ENCODE measurements at regions of chr17 and their contacts with region 1.

Region 1: GRCh38 chr17:77957857-77958715 is at the start of gene TNRC6C:
- DNase-seq: peak; percentile 100
- ATAC-seq: peak; percentile 93 to 98
- H3K4me3 ChIP-seq: peak within 1 kb of the TSS; percentile 81
- H3K27ac ChIP-seq: peak within 1 kb of the TSS; percentile 74 to 91
- H3K4me1 ChIP-seq: peaks cover 5% of the 10 kb centered on the region; the same call in 2 of the 3 replicates
- CTCF ChIP-seq: 0 out of 3 replicates have a peak, but pooled peaks have one; percentile 12
- EP300 ChIP-seq: no peak
- POLR2A ChIP-seq: peak; percentile 100
- RAD21 ChIP-seq: no peak; a peak in 1 of 5 replicates
- polyA plus RNA-seq, gene TNRC6C: 1.3 and 3.4 TPM in 2 replicates

Region 2: GRCh38 chr17:77555741-77556291 is 402.3 kb before region 1 on chr17:
- CTCF ChIA-PET with region 1: no interaction called
- POLR2A ChIA-PET with region 1: interaction called, 11 read pairs
- DNase-seq: peak in 1 of 2 experiments; percentile 34
- ATAC-seq: peak in 1 of 2 experiments; percentile 24; a peak in 3 of 6 replicates
- H3K4me3 ChIP-seq: no peak overlapping the region
- H3K27ac ChIP-seq: no peak overlapping the region
- H3K4me1 ChIP-seq: 0 out of 3 replicates have a peak, but pooled peaks cover 3% of the 10 kb centered on the region
- CTCF ChIP-seq: no peak
- EP300 ChIP-seq: no peak
- POLR2A ChIP-seq: no peak
- RAD21 ChIP-seq: no peak

Region 3: GRCh38 chr17:77869665-77870132 is 88.4 kb before region 1 on chr17:
- CTCF ChIA-PET with region 1: no interaction called
- POLR2A ChIA-PET with region 1: interaction called, 18 read pairs
- DNase-seq: no peak
- ATAC-seq: no peak
- H3K4me3 ChIP-seq: no peak overlapping the region
- H3K27ac ChIP-seq: no peak overlapping the region
- H3K4me1 ChIP-seq: no peaks in the 10 kb centered on the region
- CTCF ChIP-seq: no peak
- EP300 ChIP-seq: no peak
- POLR2A ChIP-seq: no peak
- RAD21 ChIP-seq: no peak

Region 4: DNA sequence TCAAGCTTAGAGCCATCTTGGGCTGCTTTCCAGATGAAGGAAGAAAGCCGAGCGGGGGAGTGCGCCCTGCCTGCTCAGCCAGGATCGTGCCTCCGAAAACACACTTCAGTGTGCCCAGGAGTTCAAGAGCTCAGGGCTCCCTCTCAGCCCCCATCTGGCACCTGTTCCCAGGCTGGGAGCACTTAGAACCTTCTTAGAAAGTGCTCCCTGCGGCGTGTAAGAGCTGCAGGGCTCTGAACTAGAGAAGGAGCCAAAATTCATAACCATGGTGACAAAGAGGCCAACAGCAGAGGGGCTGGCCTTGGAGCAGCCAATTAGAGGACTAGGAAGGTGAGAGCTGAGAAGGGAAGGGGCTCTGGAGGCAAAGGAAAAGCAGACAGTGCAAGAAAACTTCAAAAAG is 58.6 kb before region 1 on chr17:
- CTCF ChIA-PET with region 1: interaction called, 4 read pairs
- POLR2A ChIA-PET with region 1: interaction called, 16 read pairs
- DNase-seq: no peak
- ATAC-seq: no peak
- H3K4me3 ChIP-seq: no peak overlapping the region
- H3K27ac ChIP-seq: no peak overlapping the region
- H3K4me1 ChIP-seq: no peaks in the 10 kb centered on the region
- CTCF ChIP-seq: no peak
- EP300 ChIP-seq: no peak
- POLR2A ChIP-seq: no peak
- RAD21 ChIP-seq: no peak

Region 5: GRCh38 chr17:77936881-77937280 is 21.2 kb before region 1 on chr17:
- CTCF ChIA-PET with region 1: interaction called, 10 read pairs
- POLR2A ChIA-PET with region 1: interaction called, 37 read pairs
- DNase-seq: no peak
- ATAC-seq: no peak
- H3K4me3 ChIP-seq: no peak overlapping the region
- H3K27ac ChIP-seq: no peak overlapping the region
- H3K4me1 ChIP-seq: no peaks in the 10 kb centered on the region
- CTCF ChIP-seq: no peak
- EP300 ChIP-seq: no peak
- POLR2A ChIP-seq: no peak
- RAD21 ChIP-seq: no peak

Region 6: DNA sequence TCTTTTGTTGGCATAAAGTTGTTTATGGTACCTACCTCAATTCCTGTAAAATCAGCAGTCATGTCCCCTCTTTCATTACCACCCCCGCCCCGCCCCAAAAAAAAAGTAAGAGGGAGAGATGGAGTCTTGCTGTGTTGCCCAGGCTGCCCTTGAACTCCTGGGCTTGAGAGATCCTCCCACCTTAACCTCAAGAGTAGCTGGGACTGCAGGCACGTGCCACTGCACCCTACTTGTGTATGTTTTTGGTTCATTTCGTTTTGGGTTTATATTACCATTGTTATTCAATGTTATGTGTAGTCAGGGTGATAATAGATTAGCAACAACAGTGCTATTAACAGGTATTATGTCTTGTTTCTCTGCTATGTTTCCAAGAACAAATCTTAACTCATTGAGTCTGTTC is 16.3 kb after region 1 on chr17:
- CTCF ChIA-PET with region 1: interaction called, 4 read pairs
- POLR2A ChIA-PET with region 1: interaction called, 60 read pairs
- DNase-seq: no peak
- ATAC-seq: no peak
- H3K4me3 ChIP-seq: no peak overlapping the region
- H3K27ac ChIP-seq: no peak overlapping the region
- H3K4me1 ChIP-seq: no peaks in the 10 kb centered on the region
- CTCF ChIP-seq: no peak
- EP300 ChIP-seq: no peak
- POLR2A ChIP-seq: no peak
- RAD21 ChIP-seq: no peak

Region 7: DNA sequence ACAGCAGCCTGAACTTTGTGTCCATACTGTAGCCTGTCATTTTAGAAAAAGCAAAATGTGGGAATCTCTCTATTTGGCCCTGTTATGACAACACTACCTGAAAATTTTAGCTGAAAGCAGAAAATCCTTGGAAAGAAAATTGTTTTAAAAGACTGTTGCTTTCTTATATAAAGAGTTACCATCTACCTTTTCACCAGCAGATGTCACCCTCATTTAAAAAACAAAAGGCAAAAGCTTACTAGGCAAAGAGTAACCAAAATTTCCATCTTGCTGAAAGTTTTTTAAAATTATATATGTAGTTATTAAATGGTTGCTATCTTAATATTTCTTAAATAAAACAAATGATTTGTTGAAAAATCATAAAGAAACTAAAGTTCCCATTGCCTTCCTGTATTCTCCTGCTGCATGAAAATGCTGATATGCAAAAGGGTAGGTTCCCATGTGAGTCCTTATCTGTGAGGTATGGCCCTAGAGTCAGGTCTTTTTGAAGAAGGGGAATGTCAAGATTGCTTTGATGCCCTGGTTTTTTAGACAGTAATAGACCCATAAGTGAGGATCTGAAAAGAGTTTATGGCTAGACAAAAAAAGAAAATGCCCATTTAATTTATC is 61.4 kb after region 1 on chr17:
- CTCF ChIA-PET with region 1: interaction called, 14 read pairs
- POLR2A ChIA-PET with region 1: interaction called, 25 read pairs
- DNase-seq: peak in 1 of 2 experiments; percentile 53
- ATAC-seq: peak in 1 of 2 experiments; percentile 70; a peak in 3 of 6 replicates
- H3K4me3 ChIP-seq: no peak overlapping the region
- H3K27ac ChIP-seq: no peak overlapping the region
- H3K4me1 ChIP-seq: no peaks in the 10 kb centered on the region
- CTCF ChIP-seq: peak; percentile 86
- EP300 ChIP-seq: no peak
- POLR2A ChIP-seq: no peak
- RAD21 ChIP-seq: peak; percentile 77 to 82

Region 8: GRCh38 chr17:78226749-78227399 is 268.8 kb after region 1 on chr17:
- CTCF ChIA-PET with region 1: no interaction called
- POLR2A ChIA-PET with region 1: no interaction called
- DNase-seq: no peak
- ATAC-seq: peak in 1 of 2 experiments; percentile 14; a peak in 3 of 6 replicates
- H3K4me3 ChIP-seq: no peak overlapping the region
- H3K27ac ChIP-seq: no peak overlapping the region
- H3K4me1 ChIP-seq: no peaks in the 10 kb centered on the region; the same call in 2 of the 3 replicates
- CTCF ChIP-seq: no peak
- EP300 ChIP-seq: no peak
- POLR2A ChIP-seq: no peak
- RAD21 ChIP-seq: no peak

Measured in A549 (cell line).